ENCODE measurements at regions of chr16 and their contacts with region 1.

Region 1: DNA sequence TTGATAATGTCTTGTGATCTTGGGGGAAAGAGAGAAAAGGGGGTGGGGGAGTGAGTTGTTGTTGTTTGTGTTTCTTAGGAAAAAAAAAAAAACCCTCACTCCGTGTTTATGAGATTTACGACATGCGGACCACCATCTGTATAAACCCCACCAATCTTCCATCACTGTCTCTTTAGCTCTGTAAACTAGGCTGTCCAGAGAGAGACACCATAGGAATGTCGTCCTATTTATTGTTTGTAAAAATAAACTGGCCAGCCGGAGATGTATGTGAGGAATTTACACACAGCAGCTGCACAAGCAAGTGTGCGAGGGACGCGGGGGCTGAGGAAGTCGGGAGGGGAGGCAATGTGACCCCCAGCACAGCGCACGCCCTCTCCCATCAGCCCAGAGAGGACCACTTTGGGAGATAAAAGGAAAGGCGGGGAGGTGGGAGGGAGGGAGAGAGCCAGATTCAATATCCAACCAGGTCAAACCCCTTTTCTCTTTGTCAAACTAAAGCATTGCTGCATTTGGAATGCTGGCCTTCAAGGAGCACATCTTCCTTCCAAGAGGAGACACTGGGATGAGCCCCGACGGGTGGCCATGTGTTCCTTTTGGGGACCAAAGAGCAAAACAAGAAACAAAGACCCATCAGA is 136.2 kb upstream of the SALL1 start:
- DNase-seq: no peak
- ATAC-seq: no peak
- H3K4me3 ChIP-seq: no peak overlapping the region
- H3K27ac ChIP-seq: no peak overlapping the region
- H3K4me1 ChIP-seq: no peaks in the 10 kb centered on the region
- H3K27me3 ChIP-seq: peaks cover 2% of the 10 kb centered on the region; the same call in 1 of the 2 replicates
- CTCF ChIP-seq: no peak
- POLR2A ChIP-seq: no peak
- RAD21 ChIP-seq: no peak

Region 2: GRCh38 chr16:51392521-51393187 is 105.4 kb after region 1 on chr16:
- CTCF ChIA-PET with region 1: no interaction called
- POLR2A ChIA-PET with region 1: interaction called, 28 read pairs
- dilution Hi-C with region 1: no loop called
- in situ Hi-C with region 1: no loop called
- intact Hi-C with region 1: no loop called
- DNase-seq: peak; percentile 85
- ATAC-seq: peak; percentile 73
- H3K4me3 ChIP-seq: no peak overlapping the region
- H3K27ac ChIP-seq: no peak overlapping the region
- H3K4me1 ChIP-seq: peaks cover 7% of the 10 kb centered on the region; the same call in 1 of the 2 replicates
- H3K27me3 ChIP-seq: no peaks in the 10 kb centered on the region
- CTCF ChIP-seq: no peak
- POLR2A ChIP-seq: no peak
- RAD21 ChIP-seq: no peak; the same call in 1 of the 2 replicates

Measured in IMR-90 (cell line).